Colonic mucosa (tissue), 4 donors: ENCODE measurements at regions of chr13 and their contacts with region 1.

Region 1: DNA sequence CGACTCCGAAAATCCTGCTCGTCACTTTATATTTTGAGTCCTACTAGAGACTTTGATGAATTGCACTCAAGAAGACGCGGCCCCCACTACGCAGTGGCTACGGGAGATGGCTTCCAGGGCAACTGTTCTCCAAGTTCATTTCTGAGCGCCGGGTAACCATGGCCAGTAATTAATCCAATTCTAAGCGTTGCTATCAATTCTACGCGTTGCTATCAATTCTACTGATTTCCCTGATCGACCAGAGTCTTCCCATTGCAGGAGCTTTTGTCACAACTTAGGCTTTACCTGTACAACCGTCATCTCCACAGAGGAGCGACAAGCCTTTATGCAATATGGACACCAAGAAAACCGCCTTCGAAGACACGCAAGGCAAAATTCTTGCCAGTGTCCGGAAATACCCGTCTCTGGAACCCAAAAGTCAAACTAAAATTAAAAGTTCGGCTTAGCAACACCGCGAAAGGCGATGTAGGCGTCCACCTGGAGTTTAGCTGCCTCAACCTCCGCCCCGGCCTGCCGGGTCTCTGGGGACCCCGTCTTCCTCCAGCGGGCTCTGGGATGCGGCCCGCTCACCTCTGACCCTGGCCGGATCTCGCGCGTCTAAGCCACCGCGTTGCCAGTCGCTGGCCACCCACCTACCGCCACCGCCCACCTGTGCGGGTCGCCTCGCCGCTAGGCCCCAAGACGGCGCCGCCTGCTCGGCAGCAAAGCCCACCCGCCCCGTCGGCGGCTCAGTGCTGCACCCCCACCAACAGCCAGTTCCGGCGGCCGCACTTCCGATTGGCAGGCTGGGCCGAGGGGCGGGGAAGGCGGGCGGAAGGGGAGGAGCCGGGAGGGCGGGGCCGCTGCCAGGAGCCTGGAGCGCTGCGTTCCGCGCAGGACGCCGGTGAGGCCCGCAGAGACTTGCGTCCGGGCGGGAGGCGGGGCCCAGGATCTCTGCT is at the start of gene SUPT20H:
- DNase-seq: peak; percentile 95
- H3K4me3 ChIP-seq: peak within 1 kb of the TSS; percentile 78
- H3K27ac ChIP-seq: peak within 1 kb of the TSS; percentile 69
- H3K4me1 ChIP-seq: peaks cover 5% of the 10 kb centered on the region
- H3K27me3 ChIP-seq: no peaks in the 10 kb centered on the region
- CTCF ChIP-seq: no peak
- total RNA-seq, gene SUPT20H: 40.5 to 42.2 TPM

Region 2: GRCh38 chr13:37001915-37002250 is 57.3 kb before region 1 on chr13:
- intact Hi-C with region 1: loop called (anchors 5 kb)
- DNase-seq: no peak
- H3K4me3 ChIP-seq: peak overlapping the region; percentile 84
- H3K27ac ChIP-seq: no peak overlapping the region
- H3K4me1 ChIP-seq: peaks cover 7% of the 10 kb centered on the region
- H3K27me3 ChIP-seq: no peaks in the 10 kb centered on the region
- CTCF ChIP-seq: no peak